WTC11 (cell line): ENCODE measurements at regions of chr1 and their contacts with region 1.

Region 1: GRCh38 chr1:39609618-39610331 is 29.7 kb downstream of the HEYL start:
- DNase-seq: peak; percentile 96
- ATAC-seq: peak; percentile 96
- H3K4me3 Mint-ChIP-seq: peak overlapping the region; percentile 83
- H3K27ac Mint-ChIP-seq: no peak overlapping the region
- H3K4me1 Mint-ChIP-seq: peaks cover 3% of the 10 kb centered on the region; the same call in 1 of the 2 replicates
- H3K27me3 Mint-ChIP-seq: peaks cover 60% of the 10 kb centered on the region
- CTCF ChIP-seq: peak; percentile 94

Region 2: GRCh38 chr1:39575191-39576015 is 34.4 kb before region 1 on chr1:
- CTCF ChIA-PET with region 1: interaction called, 14 read pairs
- POLR2A ChIA-PET with region 1: no interaction called
- DNase-seq: no peak
- ATAC-seq: no peak; the same call in 1 of the 2 replicates
- H3K4me3 Mint-ChIP-seq: peak overlapping the region; percentile 85
- H3K27ac Mint-ChIP-seq: peak overlapping the region; percentile 44
- H3K4me1 Mint-ChIP-seq: peaks cover 27% of the 10 kb centered on the region
- H3K27me3 Mint-ChIP-seq: peaks cover 5% of the 10 kb centered on the region; the same call in 1 of the 2 replicates
- CTCF ChIP-seq: no peak

Region 3: GRCh38 chr1:39623053-39623452 is 13.3 kb after region 1 on chr1:
- CTCF ChIA-PET with region 1: interaction called, 12 read pairs
- POLR2A ChIA-PET with region 1: no interaction called
- DNase-seq: no peak
- ATAC-seq: no peak
- H3K4me3 Mint-ChIP-seq: no peak overlapping the region
- H3K27ac Mint-ChIP-seq: no peak overlapping the region
- H3K4me1 Mint-ChIP-seq: no peaks in the 10 kb centered on the region
- H3K27me3 Mint-ChIP-seq: peaks cover 52% of the 10 kb centered on the region
- CTCF ChIP-seq: no peak

Region 4: DNA sequence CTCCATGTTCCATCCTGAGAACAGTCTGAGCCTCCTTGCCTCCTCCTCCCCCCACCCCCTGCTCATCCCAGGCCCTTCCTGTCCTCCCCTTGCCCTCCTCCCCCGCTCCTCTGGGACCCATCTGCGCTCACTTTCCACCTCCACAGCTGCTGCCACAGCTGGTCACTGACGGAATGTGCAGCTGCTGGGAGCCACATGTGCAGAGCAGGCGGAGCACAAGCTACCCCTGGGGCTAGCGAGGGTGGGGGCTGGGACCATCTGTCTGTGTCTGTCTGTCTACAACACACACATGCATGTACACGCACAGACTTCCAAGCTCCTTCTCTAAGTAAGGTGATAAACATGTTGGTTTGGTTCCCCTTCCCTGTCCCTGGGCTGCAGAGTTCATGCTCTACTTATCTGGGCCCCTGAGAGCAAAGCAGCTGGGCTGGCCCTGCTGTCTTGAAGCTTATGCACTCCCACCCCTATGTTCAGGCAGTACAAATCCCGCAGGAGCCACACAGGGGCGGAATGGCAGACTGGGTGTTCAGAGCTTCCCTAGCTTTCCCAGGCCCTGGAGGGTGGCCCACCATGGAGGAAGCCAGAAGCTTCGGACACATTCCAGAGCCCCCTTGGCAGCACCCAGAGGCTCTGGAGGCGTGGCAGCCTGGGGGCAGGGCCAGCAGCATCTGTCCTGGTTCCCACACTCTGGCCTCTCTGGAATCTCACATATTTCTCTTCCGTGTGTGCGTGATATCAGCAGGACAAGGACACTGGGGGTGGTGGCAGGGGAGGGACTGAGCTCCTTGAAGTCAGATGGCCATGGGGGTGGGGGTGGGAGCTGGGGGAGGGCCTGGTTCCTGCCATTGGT is 36.7 kb after region 1 on chr1:
- CTCF ChIA-PET with region 1: interaction called, 86 read pairs
- POLR2A ChIA-PET with region 1: interaction called, 6 read pairs
- DNase-seq: peak; percentile 68
- ATAC-seq: peak; percentile 84
- H3K4me3 Mint-ChIP-seq: no peak overlapping the region
- H3K27ac Mint-ChIP-seq: no peak overlapping the region
- H3K4me1 Mint-ChIP-seq: peaks cover 14% of the 10 kb centered on the region
- H3K27me3 Mint-ChIP-seq: peaks cover 80% of the 10 kb centered on the region
- CTCF ChIP-seq: no peak

Region 5: GRCh38 chr1:39672551-39672947 is 62.8 kb after region 1 on chr1:
- CTCF ChIA-PET with region 1: interaction called, 69 read pairs
- POLR2A ChIA-PET with region 1: no interaction called
- DNase-seq: peak; percentile 68
- ATAC-seq: peak; percentile 64
- H3K4me3 Mint-ChIP-seq: peak overlapping the region; percentile 63
- H3K27ac Mint-ChIP-seq: no peak overlapping the region
- H3K4me1 Mint-ChIP-seq: no peaks in the 10 kb centered on the region
- H3K27me3 Mint-ChIP-seq: peaks cover 100% of the 10 kb centered on the region
- CTCF ChIP-seq: peak; percentile 33; the same call in 1 of the 2 replicates

Region 6: GRCh38 chr1:39701049-39701439 is 91.3 kb after region 1 on chr1:
- CTCF ChIA-PET with region 1: interaction called, 37 read pairs
- POLR2A ChIA-PET with region 1: interaction called, 3 read pairs
- DNase-seq: peak; percentile 31
- ATAC-seq: peak; percentile 12
- H3K4me3 Mint-ChIP-seq: peak overlapping the region; percentile 50
- H3K27ac Mint-ChIP-seq: no peak overlapping the region
- H3K4me1 Mint-ChIP-seq: peaks cover 19% of the 10 kb centered on the region
- H3K27me3 Mint-ChIP-seq: peaks cover 100% of the 10 kb centered on the region
- CTCF ChIP-seq: no peak

Region 7: DNA sequence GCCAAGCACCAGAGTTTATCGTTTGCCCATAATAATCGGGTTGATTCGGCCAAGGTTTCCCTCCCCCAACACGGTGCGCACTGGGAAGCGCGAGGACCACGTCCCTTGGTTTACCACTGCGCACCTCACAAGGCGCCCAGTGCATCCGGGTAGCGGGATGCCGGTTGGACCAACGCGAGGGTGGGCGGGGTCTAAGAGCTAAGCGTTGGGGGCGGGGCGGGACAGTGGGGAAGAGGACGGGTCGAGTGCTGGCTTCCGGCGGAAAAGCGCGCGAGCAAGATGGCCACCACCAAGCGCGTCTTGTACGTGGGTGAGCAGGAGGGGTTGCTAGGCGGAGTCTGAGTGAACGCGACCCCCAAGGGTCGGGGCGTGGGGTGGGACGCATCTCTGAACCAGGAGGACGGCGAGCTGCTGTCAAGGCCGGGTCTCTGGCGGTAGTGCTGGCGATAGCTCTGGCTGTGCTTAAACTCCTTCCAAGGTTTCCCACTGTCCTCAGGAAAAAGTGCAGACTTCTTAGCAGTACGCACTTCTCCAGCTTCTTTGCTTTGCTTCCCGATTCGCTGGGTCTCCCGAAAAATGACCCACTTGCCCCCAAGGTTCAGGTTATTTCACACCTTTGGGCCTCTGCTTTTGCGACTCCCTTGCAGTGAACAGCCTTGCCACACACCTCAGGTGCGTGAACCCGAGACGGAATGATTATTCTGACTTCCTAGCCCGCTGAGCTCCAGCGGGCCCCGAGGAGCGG is 129.0 kb after region 1 on chr1 and contains the start of gene PPIE:
- CTCF ChIA-PET with region 1: interaction called, 16 read pairs
- POLR2A ChIA-PET with region 1: no interaction called
- DNase-seq: peak; percentile 92
- ATAC-seq: peak; percentile 98
- H3K4me3 Mint-ChIP-seq: peak within 1 kb of the TSS; percentile 89
- H3K27ac Mint-ChIP-seq: peak within 1 kb of the TSS; percentile 66; the same call in 1 of the 2 replicates
- H3K4me1 Mint-ChIP-seq: peaks cover 13% of the 10 kb centered on the region
- H3K27me3 Mint-ChIP-seq: peaks cover 48% of the 10 kb centered on the region
- CTCF ChIP-seq: no peak
- total RNA-seq, gene PPIE: 42.5 to 50.7 TPM (median 48.9 TPM) in 3 replicates